Endothelial cell of umbilical vein (primary cell): ENCODE measurements at regions of chr11 and their contacts with region 1.

Region 1: GRCh38 chr11:72080256-72080974 is at the starts of genes LRRC51 and NUMA1:
- DNase-seq: peak; percentile 100
- H3K4me3 ChIP-seq: peak within 1 kb of the TSS; percentile 64 to 82 (median 78)
- H3K27ac ChIP-seq: peak within 1 kb of the TSS; percentile 94
- H3K4me1 ChIP-seq: peaks cover 28% of the 10 kb centered on the region
- H3K27me3 ChIP-seq: no peaks in the 10 kb centered on the region
- CTCF ChIP-seq: no peak
- POLR2A ChIP-seq: no peak
- total RNA-seq, gene LRRC51: 3.8 and 6.1 TPM in 2 replicates
- total RNA-seq, gene NUMA1: 164 and 168 TPM in 2 replicates

Region 2: GRCh38 chr11:72069787-72070251 is 10.6 kb before region 1 on chr11:
- CTCF ChIA-PET with region 1: interaction called, 8 read pairs
- POLR2A ChIA-PET with region 1: no interaction called
- dilution Hi-C with region 1: no loop called
- intact Hi-C with region 1: loop called (anchors 1 kb)
- DNase-seq: peak; percentile 81
- H3K4me3 ChIP-seq: peak overlapping the region in 1 of 3 experiments; percentile 1
- H3K27ac ChIP-seq: peak overlapping the region; percentile 50
- H3K4me1 ChIP-seq: peaks cover 64% of the 10 kb centered on the region
- H3K27me3 ChIP-seq: no peaks in the 10 kb centered on the region
- CTCF ChIP-seq: no peak
- POLR2A ChIP-seq: peak; percentile 64

Region 3: GRCh38 chr11:72091005-72091691 is 10.7 kb after region 1 on chr11:
- CTCF ChIA-PET with region 1: interaction called, 21 read pairs
- POLR2A ChIA-PET with region 1: no interaction called
- dilution Hi-C with region 1: no loop called
- intact Hi-C with region 1: loop called (anchors 1 kb)
- DNase-seq: peak; percentile 73
- H3K4me3 ChIP-seq: no peak overlapping the region
- H3K27ac ChIP-seq: no peak overlapping the region
- H3K4me1 ChIP-seq: peaks cover 3% of the 10 kb centered on the region
- H3K27me3 ChIP-seq: no peaks in the 10 kb centered on the region
- CTCF ChIP-seq: peak; percentile 84 to 87
- POLR2A ChIP-seq: no peak

Region 4: GRCh38 chr11:72102946-72103753 is 22.7 kb after region 1 on chr11 and contains the start of gene LAMTOR1:
- CTCF ChIA-PET with region 1: interaction called, 3 read pairs
- POLR2A ChIA-PET with region 1: no interaction called
- dilution Hi-C with region 1: no loop called
- intact Hi-C with region 1: loop called (anchors 1 kb)
- DNase-seq: peak; percentile 99
- H3K4me3 ChIP-seq: peak within 1 kb of the TSS; percentile 74 to 97 (median 86)
- H3K27ac ChIP-seq: peak within 1 kb of the TSS; percentile 88
- H3K4me1 ChIP-seq: peaks cover 26% of the 10 kb centered on the region
- H3K27me3 ChIP-seq: no peaks in the 10 kb centered on the region
- CTCF ChIP-seq: peak; percentile 34 to 38
- POLR2A ChIP-seq: peak; percentile 92
- total RNA-seq, gene LAMTOR1: 91.1 and 95.1 TPM in 2 replicates

Region 5: GRCh38 chr11:72112321-72113219 is 32.2 kb after region 1 on chr11 and contains the start of gene ANAPC15:
- CTCF ChIA-PET with region 1: no interaction called
- POLR2A ChIA-PET with region 1: interaction called, 5 read pairs
- dilution Hi-C with region 1: no loop called
- intact Hi-C with region 1: loop called (anchors 1 kb)
- DNase-seq: peak; percentile 100
- H3K4me3 ChIP-seq: peak within 1 kb of the TSS; percentile 14 to 69 (median 53)
- H3K27ac ChIP-seq: peak within 1 kb of the TSS; percentile 90
- H3K4me1 ChIP-seq: peaks cover 14% of the 10 kb centered on the region
- H3K27me3 ChIP-seq: peaks cover 0 to 3% of the 10 kb centered on the region in 2 experiments
- CTCF ChIP-seq: no peak
- POLR2A ChIP-seq: peak; percentile 99
- total RNA-seq, gene ANAPC15: 67.0 and 72.4 TPM in 2 replicates